ENCODE measurements at regions of chr15 and their contacts with region 1.

Region 1: GRCh38 chr15:30903497-30904201 is at the start of gene FAN1:
- DNase-seq: peak; percentile 90
- H3K4me3 ChIP-seq: peak within 1 kb of the TSS; percentile 1 to 87 (median 80)
- H3K27ac ChIP-seq: no peak within 1 kb of the TSS
- H3K4me1 ChIP-seq: peaks cover 7% of the 10 kb centered on the region
- H3K27me3 ChIP-seq: peaks cover 0 to 2% of the 10 kb centered on the region in 2 experiments
- CTCF ChIP-seq: no peak
- POLR2A ChIP-seq: peak; percentile 74
- total RNA-seq, gene FAN1: 11.7 and 12.0 TPM in 2 replicates

Region 2: GRCh38 chr15:30859091-30859874 is 44.4 kb before region 1 on chr15:
- CTCF ChIA-PET with region 1: interaction called, 10 read pairs
- POLR2A ChIA-PET with region 1: no interaction called
- dilution Hi-C with region 1: no loop called
- intact Hi-C with region 1: no loop called
- DNase-seq: peak; percentile 62
- H3K4me3 ChIP-seq: no peak overlapping the region
- H3K27ac ChIP-seq: no peak overlapping the region
- H3K4me1 ChIP-seq: no peaks in the 10 kb centered on the region
- H3K27me3 ChIP-seq: peaks cover 2 to 3% of the 10 kb centered on the region in 2 experiments
- CTCF ChIP-seq: peak; percentile 55 to 65
- POLR2A ChIP-seq: no peak

Region 3: DNA sequence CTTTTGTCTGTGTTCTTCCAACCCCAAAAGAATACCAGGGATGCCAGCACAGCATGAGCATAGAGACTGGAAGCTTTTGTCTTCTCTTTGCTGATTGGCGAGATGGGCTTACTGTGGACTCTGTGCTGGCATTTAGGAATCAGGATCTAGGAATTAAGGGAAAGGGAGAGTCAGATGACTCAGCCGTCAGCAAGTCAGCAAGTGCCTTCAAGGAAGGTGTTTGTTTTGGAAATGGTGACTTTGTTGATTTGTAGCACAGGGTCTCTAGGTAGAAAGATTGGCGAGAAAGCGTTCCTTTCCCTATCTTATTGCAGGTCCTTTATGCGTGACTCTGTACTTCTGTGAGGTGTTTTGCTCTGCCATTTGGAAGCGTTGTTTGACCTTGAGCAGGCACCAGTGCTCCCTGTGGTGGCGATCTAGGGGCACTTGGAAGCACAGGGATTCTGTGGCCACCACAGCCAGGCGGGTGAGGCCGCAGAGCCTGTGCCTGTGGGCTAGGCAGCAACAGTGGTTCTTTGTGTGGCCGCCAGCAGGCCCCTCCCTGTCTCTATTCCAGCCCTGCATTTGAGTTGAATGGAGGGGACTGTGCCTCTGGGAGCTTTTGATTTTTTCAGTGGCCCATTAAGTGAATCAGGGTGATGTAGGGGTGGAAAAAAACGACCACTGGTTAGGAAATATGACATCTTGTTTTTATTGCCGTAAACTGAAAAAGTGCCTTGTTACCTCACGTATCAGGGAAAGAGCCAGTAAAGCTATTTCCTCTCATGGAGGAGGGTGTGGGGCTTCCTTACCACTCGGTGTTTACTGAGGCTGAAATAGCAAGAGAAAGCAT is 19.0 kb after region 1 on chr15:
- CTCF ChIA-PET with region 1: interaction called, 5 read pairs
- POLR2A ChIA-PET with region 1: no interaction called
- dilution Hi-C with region 1: no loop called
- intact Hi-C with region 1: loop called (anchors 1 kb)
- DNase-seq: peak; percentile 83
- H3K4me3 ChIP-seq: no peak overlapping the region
- H3K27ac ChIP-seq: peak overlapping the region; percentile 60
- H3K4me1 ChIP-seq: peaks cover 18% of the 10 kb centered on the region
- H3K27me3 ChIP-seq: no peaks in the 10 kb centered on the region
- CTCF ChIP-seq: no peak
- POLR2A ChIP-seq: no peak

Region 4: GRCh38 chr15:31280046-31280830 is 376.6 kb after region 1 on chr15:
- CTCF ChIA-PET with region 1: no interaction called
- POLR2A ChIA-PET with region 1: no interaction called
- dilution Hi-C with region 1: no loop called
- intact Hi-C with region 1: no loop called
- DNase-seq: no peak
- H3K4me3 ChIP-seq: no peak overlapping the region
- H3K27ac ChIP-seq: no peak overlapping the region
- H3K4me1 ChIP-seq: no peaks in the 10 kb centered on the region
- H3K27me3 ChIP-seq: no peaks in the 10 kb centered on the region
- CTCF ChIP-seq: no peak
- POLR2A ChIP-seq: no peak

Measured in endothelial cell of umbilical vein (primary cell).